ENCODE measurements at regions of chr13 and their contacts with region 1.

Region 1: DNA sequence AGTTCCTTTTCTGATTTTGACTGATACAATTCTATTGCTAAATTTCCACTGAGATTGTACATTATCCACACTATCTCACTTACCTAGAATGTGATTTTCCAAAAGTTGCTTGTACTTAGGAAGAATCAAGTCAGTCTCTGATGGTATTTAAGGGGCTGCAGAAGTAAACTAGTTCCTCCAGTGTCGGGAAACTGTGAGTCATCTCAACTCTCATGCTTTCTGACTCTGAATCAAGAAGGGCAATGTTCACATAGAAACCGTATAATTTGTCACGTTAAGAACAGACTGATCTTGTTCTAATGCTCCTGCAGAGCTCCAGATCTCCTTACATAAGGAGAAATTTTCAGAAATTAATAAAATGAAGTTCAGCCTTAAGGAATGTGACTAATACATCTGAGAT is 369.3 kb downstream of the KLF5 start:
- DNase-seq: peak; percentile 28 to 70
- H3K4me3 ChIP-seq: no peak overlapping the region
- H3K27ac ChIP-seq: peak overlapping the region; percentile 88
- H3K4me1 ChIP-seq: peaks cover 38% of the 10 kb centered on the region
- H3K27me3 ChIP-seq: no peaks in the 10 kb centered on the region
- CTCF ChIP-seq: no peak

Region 2: DNA sequence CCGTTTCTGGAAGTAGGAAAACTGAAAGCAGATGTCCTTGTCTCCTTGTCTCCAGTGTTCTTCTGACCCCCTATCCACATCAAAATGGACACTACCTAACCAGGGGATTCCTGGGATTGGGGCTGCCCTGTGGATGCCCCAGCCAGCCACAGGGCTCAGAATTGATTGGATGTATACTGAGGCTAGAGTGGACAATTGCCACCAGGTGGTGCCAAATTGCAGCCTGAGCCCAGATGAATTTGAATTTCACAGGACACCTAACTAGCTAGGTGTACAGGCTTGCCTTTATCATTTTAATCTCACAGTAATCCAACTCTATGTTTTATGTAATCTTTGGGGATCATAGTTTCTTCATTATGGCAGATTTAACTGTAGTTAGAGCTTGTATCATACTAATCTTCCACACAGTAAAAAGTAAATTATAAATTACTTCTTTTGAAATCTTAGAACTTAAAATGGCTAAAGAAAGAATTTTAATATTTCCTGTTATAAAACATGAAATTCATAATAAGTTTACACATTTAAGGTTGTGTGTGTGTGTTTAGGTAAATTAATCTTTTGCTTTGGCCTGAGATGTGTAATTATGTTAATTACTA is 588.2 kb before region 1 on chr13:
- CTCF ChIA-PET with region 1: no interaction called
- POLR2A ChIA-PET with region 1: no interaction called
- intact Hi-C with region 1: loop called (anchors 10 kb)
- DNase-seq: peak; percentile 39 to 54
- H3K4me3 ChIP-seq: no peak overlapping the region
- H3K27ac ChIP-seq: no peak overlapping the region
- H3K4me1 ChIP-seq: no peaks in the 10 kb centered on the region
- H3K27me3 ChIP-seq: no peaks in the 10 kb centered on the region
- CTCF ChIP-seq: peak; percentile 81

Region 3: GRCh38 chr13:73138643-73139491 is 289.3 kb before region 1 on chr13:
- CTCF ChIA-PET with region 1: no interaction called
- POLR2A ChIA-PET with region 1: no interaction called
- intact Hi-C with region 1: loop called (anchors 2 kb)
- DNase-seq: peak; percentile 63 to 97
- H3K4me3 ChIP-seq: peak overlapping the region; percentile 57; the same call in 1 of the 2 replicates
- H3K27ac ChIP-seq: peak overlapping the region; percentile 100
- H3K4me1 ChIP-seq: peaks cover 74% of the 10 kb centered on the region
- H3K27me3 ChIP-seq: no peaks in the 10 kb centered on the region
- CTCF ChIP-seq: no peak

Region 4: GRCh38 chr13:73335221-73335620 is 92.9 kb before region 1 on chr13:
- CTCF ChIA-PET with region 1: no interaction called
- POLR2A ChIA-PET with region 1: no interaction called
- intact Hi-C with region 1: loop called (anchors 2 kb)
- DNase-seq: peak in 1 of 2 experiments; percentile 96
- H3K4me3 ChIP-seq: no peak overlapping the region
- H3K27ac ChIP-seq: peak overlapping the region; percentile 99
- H3K4me1 ChIP-seq: peaks cover 44% of the 10 kb centered on the region
- H3K27me3 ChIP-seq: no peaks in the 10 kb centered on the region
- CTCF ChIP-seq: no peak

Region 5: DNA sequence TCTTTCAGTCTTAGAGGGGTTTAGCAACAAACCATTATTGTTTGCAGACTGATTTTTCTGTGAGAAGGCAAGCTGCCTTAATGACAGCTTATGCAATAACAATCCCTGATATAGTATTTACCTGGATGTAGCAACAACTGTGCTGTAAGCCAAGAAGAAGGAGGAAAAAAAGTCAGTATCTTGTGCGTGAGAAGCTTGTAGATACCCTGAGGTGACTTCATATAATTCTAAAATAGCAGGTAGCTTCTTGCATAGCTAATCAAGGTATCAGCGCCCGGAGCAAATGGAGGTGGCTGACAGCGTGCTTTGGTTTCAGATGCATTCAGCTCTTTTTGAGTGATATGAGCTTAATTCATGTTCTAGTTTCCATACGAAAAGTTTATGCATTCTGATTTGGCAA is 59.5 kb before region 1 on chr13:
- CTCF ChIA-PET with region 1: no interaction called
- POLR2A ChIA-PET with region 1: no interaction called
- intact Hi-C with region 1: loop called (anchors 2 kb)
- DNase-seq: peak; percentile 17 to 96
- H3K4me3 ChIP-seq: peak overlapping the region; percentile 10; the same call in 1 of the 2 replicates
- H3K27ac ChIP-seq: peak overlapping the region; percentile 96
- H3K4me1 ChIP-seq: peaks cover 52% of the 10 kb centered on the region
- H3K27me3 ChIP-seq: no peaks in the 10 kb centered on the region
- CTCF ChIP-seq: no peak

Region 6: GRCh38 chr13:73465617-73465971 is 37.5 kb after region 1 on chr13:
- CTCF ChIA-PET with region 1: no interaction called
- POLR2A ChIA-PET with region 1: no interaction called
- intact Hi-C with region 1: loop called (anchors 1 kb)
- DNase-seq: peak; percentile 8 to 75
- H3K4me3 ChIP-seq: no peak overlapping the region
- H3K27ac ChIP-seq: peak overlapping the region; percentile 86
- H3K4me1 ChIP-seq: peaks cover 19% of the 10 kb centered on the region
- H3K27me3 ChIP-seq: no peaks in the 10 kb centered on the region
- CTCF ChIP-seq: no peak

Region 7: GRCh38 chr13:73492811-73493210 is 64.7 kb after region 1 on chr13:
- CTCF ChIA-PET with region 1: no interaction called
- POLR2A ChIA-PET with region 1: no interaction called
- intact Hi-C with region 1: no loop called
- DNase-seq: no peak
- H3K4me3 ChIP-seq: no peak overlapping the region
- H3K27ac ChIP-seq: no peak overlapping the region
- H3K4me1 ChIP-seq: peaks cover 14% of the 10 kb centered on the region
- H3K27me3 ChIP-seq: no peaks in the 10 kb centered on the region
- CTCF ChIP-seq: no peak

Region 8: DNA sequence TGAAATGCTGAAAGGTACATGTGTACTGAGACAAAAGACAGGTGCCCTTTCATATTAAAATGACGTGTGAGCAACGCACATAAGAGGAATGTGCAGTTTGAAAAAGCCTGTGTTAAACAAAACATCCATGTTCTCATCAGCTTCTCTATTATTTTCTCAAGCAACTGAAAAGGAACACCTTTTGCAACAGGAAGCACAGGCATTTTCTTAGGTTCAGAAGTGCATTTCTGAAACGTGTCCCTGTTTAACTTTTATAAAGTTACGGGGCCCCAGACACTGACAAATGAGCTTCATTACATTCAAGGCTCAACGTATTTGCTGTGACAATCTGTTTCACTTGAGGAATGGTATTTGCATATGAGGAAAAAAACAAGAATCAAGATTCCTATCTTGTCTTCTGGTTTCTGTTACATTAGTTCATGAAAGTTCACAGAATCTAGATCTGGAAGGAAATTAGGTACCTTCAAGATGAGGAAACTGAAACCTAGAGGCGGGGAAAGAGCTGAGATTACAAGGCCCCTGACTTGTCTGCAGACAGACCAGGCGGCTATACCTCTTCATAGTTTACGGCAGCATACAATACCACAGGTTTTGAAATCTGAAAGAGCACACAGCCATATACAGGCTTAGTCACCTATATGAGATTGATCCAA is 274.4 kb after region 1 on chr13:
- CTCF ChIA-PET with region 1: no interaction called
- POLR2A ChIA-PET with region 1: interaction called, 8 read pairs
- intact Hi-C with region 1: loop called (anchors 1 kb)
- DNase-seq: peak in 1 of 2 experiments; percentile 23
- H3K4me3 ChIP-seq: no peak overlapping the region
- H3K27ac ChIP-seq: no peak overlapping the region
- H3K4me1 ChIP-seq: no peaks in the 10 kb centered on the region
- H3K27me3 ChIP-seq: no peaks in the 10 kb centered on the region
- CTCF ChIP-seq: no peak

Measured in PC-9 (cell line).